ENCODE measurements at regions of chr17 and their contacts with region 1.

Region 1: GRCh38 chr17:35918665-35919064 is 11.9 kb downstream of the RDM1 start:
- DNase-seq: no peak
- ATAC-seq: no peak
- H3K4me3 ChIP-seq: no peak overlapping the region
- H3K27ac ChIP-seq: no peak overlapping the region
- H3K4me1 ChIP-seq: no peaks in the 10 kb centered on the region
- H3K27me3 ChIP-seq: no peaks in the 10 kb centered on the region
- CTCF ChIP-seq: no peak
- EP300 ChIP-seq: no peak
- POLR2A ChIP-seq: no peak
- RAD21 ChIP-seq: no peak

Region 2: GRCh38 chr17:35930211-35931065 is 11.8 kb after region 1 on chr17 and contains the start of gene RDM1:
- CTCF ChIA-PET with region 1: interaction called, 3 read pairs
- POLR2A ChIA-PET with region 1: interaction called, 4 read pairs
- RAD21 ChIA-PET with region 1: interaction called, 3 read pairs
- SMC1A ChIA-PET with region 1: interaction called, 10 read pairs
- in situ Hi-C with region 1: no loop called
- intact Hi-C with region 1: no loop called
- DNase-seq: peak; percentile 53
- ATAC-seq: peak; percentile 98
- H3K4me3 ChIP-seq: peak within 1 kb of the TSS; percentile 62
- H3K27ac ChIP-seq: peak within 1 kb of the TSS; percentile 51
- H3K4me1 ChIP-seq: peaks cover 5% of the 10 kb centered on the region; the same call in 1 of the 2 replicates
- H3K27me3 ChIP-seq: no peaks in the 10 kb centered on the region
- CTCF ChIP-seq: no peak
- EP300 ChIP-seq: peak in 1 of 2 experiments; percentile 3; a peak in 1 of 4 replicates
- POLR2A ChIP-seq: peak; percentile 77
- RAD21 ChIP-seq: no peak
- polyA plus RNA-seq, gene RDM1: 12.0 to 15.9 TPM

Region 3: DNA sequence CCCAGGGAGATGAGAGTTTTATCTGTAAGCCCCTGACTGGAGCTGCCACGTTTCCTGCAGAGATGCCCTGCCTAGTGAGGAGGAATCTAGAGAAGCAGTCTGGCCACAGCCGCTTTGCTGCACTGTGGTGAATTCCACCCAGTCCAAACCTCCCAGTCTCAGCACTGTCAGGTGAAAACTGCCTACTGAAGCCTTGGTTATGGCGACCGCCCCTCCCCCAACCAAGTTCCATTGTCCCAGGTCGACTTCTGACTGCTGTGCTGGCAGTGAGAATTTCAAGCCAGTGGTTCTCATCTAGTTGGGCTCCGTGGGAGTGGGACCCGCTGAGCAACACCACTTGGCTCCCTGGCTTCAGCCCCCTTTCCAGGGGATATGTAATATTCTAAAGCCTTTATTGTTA is 35.1 kb after region 1 on chr17:
- CTCF ChIA-PET with region 1: no interaction called
- POLR2A ChIA-PET with region 1: no interaction called
- RAD21 ChIA-PET with region 1: no interaction called
- SMC1A ChIA-PET with region 1: no interaction called
- in situ Hi-C with region 1: no loop called
- intact Hi-C with region 1: no loop called
- DNase-seq: no peak
- ATAC-seq: no peak
- H3K4me3 ChIP-seq: no peak overlapping the region
- H3K27ac ChIP-seq: no peak overlapping the region
- H3K4me1 ChIP-seq: no peaks in the 10 kb centered on the region
- H3K27me3 ChIP-seq: no peaks in the 10 kb centered on the region; a peak in 1 of 4 replicates
- CTCF ChIP-seq: no peak
- EP300 ChIP-seq: no peak
- POLR2A ChIP-seq: no peak
- RAD21 ChIP-seq: no peak

Measured in GM12878 (cell line).